ENCODE measurements at regions of chr15 and their contacts with region 1.

Region 1: GRCh38 chr15:89129123-89129815 is 41.0 kb downstream of the ABHD2 start:
- H3K4me3 ChIP-seq: no peak overlapping the region
- H3K27ac ChIP-seq: no peak overlapping the region
- H3K4me1 ChIP-seq: no peaks in the 10 kb centered on the region
- CTCF ChIP-seq: peak; percentile 18; the same call in 1 of the 2 replicates

Region 2: DNA sequence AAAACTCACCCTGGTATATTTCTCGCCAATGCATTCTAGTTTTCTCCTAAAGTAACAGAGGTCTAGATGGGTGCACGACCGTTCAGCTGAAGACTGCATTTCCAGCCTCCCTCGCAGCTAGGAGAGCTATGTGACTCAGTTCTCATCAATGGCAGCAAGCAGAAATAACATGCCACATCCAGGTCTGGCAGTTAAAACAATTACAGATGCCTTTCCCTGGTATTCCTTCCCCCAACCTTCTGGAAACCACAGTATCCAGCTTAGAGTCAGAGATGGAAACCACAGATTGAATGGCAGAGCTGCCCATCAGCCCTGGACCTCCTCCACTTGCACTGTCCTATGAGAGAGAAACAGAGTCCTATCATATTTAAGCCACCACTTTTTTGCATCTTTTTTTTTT is 238.8 kb before region 1 on chr15:
- CTCF ChIA-PET with region 1: no interaction called
- POLR2A ChIA-PET with region 1: no interaction called
- H3K4me3 ChIP-seq: no peak overlapping the region
- H3K27ac ChIP-seq: no peak overlapping the region
- H3K4me1 ChIP-seq: peaks cover 5% of the 10 kb centered on the region
- CTCF ChIP-seq: no peak

Region 3: DNA sequence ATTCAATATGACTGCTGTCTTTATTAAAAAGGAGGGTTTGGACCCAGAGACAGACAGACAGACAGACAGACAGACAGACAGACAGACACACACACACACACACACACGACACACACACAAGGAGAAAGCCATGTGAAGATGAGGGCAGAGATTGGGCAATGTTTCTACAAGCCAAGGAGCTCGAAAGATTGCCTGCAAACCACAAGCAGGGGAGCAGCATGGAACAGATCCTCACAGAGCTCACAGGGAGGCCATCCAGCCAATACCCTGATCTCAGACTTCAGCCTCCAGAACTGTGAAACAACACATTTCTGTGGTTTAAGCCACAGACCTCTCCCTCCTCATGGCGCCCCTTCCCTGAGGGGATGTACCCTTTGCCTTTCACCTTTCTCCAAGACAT is 76.8 kb before region 1 on chr15:
- CTCF ChIA-PET with region 1: interaction called, 120 read pairs
- POLR2A ChIA-PET with region 1: no interaction called
- H3K4me3 ChIP-seq: no peak overlapping the region
- H3K27ac ChIP-seq: no peak overlapping the region
- H3K4me1 ChIP-seq: no peaks in the 10 kb centered on the region
- CTCF ChIP-seq: no peak

Region 4: GRCh38 chr15:89075846-89076245 is 53.4 kb before region 1 on chr15:
- CTCF ChIA-PET with region 1: interaction called, 10 read pairs
- POLR2A ChIA-PET with region 1: no interaction called
- H3K4me3 ChIP-seq: no peak overlapping the region
- H3K27ac ChIP-seq: no peak overlapping the region
- H3K4me1 ChIP-seq: no peaks in the 10 kb centered on the region
- CTCF ChIP-seq: no peak

Region 5: DNA sequence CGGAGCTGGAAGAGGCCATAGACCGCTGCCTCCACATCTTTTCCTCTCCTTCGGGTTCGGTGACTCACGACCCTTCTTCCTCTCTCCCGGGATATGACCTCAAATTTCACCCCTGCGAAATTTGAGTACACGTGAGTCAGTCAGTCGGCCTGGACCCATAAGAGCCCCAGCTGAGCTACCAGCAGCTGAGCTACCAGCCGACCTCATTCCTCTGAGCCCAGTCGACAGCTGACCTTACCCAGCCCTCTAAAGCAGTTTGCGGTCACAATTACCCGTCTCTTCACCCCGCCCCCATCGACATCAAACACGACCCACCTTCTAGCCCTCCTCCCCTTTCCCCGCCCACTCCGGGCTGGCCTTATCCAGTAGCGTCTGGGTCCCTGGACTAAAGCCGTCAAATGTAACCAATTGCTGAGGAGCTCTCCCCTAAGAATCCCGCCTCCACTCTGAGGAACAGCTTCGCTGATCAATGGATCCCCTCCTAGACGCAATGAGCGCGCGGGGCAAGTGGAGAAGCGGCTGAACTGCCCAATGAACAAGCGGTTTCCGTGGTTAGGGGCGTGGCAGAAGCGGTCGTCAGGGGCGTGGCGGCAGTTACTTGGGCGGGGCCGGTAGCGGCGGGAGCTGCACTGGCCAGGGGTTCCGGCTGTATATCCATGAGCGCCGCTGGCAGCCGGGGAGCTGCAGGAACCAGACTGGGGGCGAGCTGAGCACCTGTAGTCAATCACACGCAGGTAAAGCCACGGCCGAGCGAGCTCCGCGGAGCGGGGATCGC is 41.3 kb before region 1 on chr15 and contains the start of gene ABHD2:
- CTCF ChIA-PET with region 1: interaction called, 17 read pairs
- POLR2A ChIA-PET with region 1: interaction called, 10 read pairs
- H3K4me3 ChIP-seq: peak within 1 kb of the TSS; percentile 90
- H3K27ac ChIP-seq: peak within 1 kb of the TSS; percentile 55; the same call in 1 of the 2 replicates
- H3K4me1 ChIP-seq: peaks cover 28% of the 10 kb centered on the region
- CTCF ChIP-seq: no peak

Region 6: GRCh38 chr15:89112341-89112971 is 16.8 kb before region 1 on chr15:
- CTCF ChIA-PET with region 1: interaction called, 31 read pairs
- POLR2A ChIA-PET with region 1: no interaction called
- H3K4me3 ChIP-seq: no peak overlapping the region
- H3K27ac ChIP-seq: no peak overlapping the region
- H3K4me1 ChIP-seq: no peaks in the 10 kb centered on the region; the same call in 1 of the 2 replicates
- CTCF ChIP-seq: no peak

Region 7: DNA sequence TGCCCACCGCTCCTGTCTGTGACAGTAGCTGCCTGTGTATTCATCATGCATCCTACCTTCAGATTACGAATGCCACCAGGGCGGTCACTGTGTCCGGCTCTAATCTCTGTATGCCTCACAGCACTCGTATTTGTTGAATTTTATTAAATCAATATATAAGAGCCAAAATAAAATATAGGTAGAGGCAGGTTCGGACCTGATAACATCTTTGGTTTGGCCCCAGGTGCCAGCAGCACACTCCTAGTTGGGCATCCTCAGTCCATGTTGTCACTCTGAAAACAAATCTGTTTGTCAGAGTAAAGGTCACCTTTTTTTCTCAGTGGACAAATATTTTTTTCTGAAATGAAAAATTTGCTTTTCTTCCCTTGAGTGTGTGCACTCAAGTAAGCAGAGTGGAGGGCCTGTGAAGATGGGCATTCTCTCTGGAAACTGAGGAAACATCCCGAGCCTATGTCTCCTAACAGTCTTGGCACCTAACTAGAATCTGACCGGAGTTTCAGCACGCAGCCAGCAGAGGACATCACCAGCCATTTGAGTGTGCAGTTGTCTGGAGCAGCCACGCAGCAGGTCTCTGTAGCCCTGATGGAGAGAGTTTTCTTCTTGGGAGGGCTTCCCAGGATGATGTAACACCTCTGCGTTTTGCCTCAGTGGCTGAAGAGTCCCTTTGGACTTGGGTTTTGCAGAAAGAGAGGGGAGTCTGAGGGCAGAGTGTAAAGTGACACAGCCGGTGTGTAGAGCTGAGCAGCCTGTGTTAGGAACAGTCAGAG is 10.3 kb after region 1 on chr15:
- CTCF ChIA-PET with region 1: interaction called, 30 read pairs
- POLR2A ChIA-PET with region 1: interaction called, 4 read pairs
- H3K4me3 ChIP-seq: no peak overlapping the region
- H3K27ac ChIP-seq: peak overlapping the region; percentile 53; the same call in 1 of the 2 replicates
- H3K4me1 ChIP-seq: peaks cover 17% of the 10 kb centered on the region
- CTCF ChIP-seq: peak; percentile 64

Region 8: DNA sequence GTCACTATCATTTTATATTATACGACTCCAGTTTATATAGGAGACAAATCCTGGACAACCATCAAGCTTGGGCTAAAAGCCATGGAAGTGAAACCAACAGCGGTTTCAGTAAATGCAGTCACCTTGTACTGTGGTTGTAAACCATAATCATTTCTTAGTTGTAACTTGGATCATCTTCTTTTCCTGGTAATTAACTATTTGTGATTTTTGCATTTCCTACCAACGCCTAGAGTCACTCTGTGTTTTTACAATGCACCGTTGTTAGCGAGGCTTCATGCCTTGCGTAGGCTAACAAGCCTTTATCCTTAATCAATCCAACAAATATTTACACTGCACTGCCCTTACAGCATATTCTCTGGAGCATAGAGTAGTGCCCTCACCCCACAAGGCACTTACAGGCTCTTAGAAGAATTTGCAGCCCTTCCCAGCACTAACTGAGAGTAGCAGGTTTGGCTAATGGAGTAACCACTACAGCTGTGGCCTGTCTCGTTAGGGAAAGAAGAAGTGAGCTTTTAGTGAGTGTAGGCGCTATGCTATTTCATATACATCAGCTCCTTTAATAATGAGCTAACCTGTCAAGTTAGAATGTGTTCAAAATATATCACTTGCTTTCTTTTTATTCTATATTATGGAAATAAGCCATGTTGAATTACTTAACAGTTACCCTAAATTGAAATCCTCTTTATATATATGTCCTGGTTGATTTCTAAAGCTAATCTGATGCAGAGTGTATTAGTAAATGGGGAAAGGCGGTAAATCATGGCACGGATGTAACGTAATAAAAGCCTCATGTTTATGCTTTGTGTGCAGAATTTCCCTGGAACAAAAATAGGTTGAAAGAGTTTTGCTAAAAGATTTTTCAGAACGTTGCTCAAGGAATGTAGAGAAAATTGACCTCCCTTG is 21.7 kb after region 1 on chr15:
- CTCF ChIA-PET with region 1: interaction called, 19 read pairs
- POLR2A ChIA-PET with region 1: no interaction called
- H3K4me3 ChIP-seq: no peak overlapping the region
- H3K27ac ChIP-seq: no peak overlapping the region
- H3K4me1 ChIP-seq: no peaks in the 10 kb centered on the region; the same call in 1 of the 2 replicates
- CTCF ChIP-seq: no peak

Region 9: DNA sequence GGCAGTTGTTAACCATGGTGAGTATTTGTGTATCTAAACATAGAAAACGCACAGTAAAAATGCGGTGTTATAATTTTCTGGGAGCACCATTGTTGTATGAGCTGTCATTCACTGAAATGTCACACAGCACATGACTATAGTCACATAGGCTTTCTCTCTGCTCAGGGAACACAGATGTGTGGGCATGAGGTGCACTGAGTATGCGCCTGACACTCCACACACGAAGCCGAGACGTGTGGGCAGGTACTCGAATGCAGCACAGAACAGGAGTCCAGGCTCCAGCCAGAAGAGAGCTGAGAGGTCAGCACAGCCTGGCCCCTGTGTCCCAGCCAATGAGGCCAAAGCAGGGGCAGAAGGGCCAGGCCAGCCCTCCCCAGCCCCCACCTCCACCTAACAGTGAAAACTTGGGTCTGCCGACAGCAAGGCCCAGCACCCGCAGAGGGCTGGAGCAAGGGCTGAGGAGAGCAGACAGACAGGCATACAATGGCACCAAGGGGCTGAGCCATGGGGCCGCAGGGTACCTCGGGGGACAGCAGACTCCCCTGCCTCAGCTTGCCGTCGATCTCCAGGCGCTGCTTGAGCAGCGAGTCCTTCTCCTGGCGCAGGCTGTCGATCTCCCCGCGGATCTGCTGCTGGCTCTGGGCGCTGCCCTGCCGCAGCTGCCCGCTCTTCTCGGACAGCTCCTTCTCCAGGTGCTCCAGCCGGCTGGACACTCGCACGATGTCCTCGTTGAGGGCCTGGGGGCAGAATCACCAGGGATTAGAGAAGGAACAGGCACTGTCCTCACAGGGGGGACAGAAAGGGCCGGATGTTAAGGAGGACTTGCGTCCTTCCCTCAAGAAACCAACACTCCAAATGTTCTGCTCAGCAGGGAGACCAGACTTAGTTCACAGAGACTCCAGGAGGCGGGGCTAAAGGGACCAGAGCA is 502.0 kb after region 1 on chr15:
- CTCF ChIA-PET with region 1: no interaction called
- POLR2A ChIA-PET with region 1: no interaction called
- H3K4me3 ChIP-seq: no peak overlapping the region
- H3K27ac ChIP-seq: no peak overlapping the region
- H3K4me1 ChIP-seq: no peaks in the 10 kb centered on the region
- CTCF ChIP-seq: no peak